ENCODE measurements at regions of chr7 and their contacts with region 1.

Region 1: GRCh38 chr7:120805636-120806388 is 52.1 kb downstream of the TSPAN12 start:
- DNase-seq: peak in 1 of 2 donors; percentile 53
- ATAC-seq: peak; percentile 56

Region 2: DNA sequence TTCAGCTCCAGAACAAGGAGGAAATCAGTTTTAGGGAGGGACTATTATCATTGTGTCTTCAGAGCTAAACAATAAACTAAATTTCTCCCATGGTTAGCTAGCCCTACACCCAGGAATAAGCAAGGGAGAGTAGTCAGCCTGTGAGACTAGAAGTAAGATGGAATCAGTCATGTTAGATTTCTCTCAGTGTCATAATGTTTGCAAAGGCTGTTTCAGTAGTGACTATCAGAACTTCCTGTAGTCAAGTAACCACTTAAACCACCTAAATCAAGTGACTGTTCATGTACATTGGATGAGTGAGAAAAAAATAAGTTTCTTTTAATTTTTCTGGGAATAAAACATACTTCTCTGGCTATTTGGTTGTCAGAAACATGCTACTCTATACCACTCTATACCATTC is 411.2 kb before region 1 on chr7:
- intact Hi-C with region 1: no loop called
- DNase-seq: no peak
- ATAC-seq: no peak

Region 3: DNA sequence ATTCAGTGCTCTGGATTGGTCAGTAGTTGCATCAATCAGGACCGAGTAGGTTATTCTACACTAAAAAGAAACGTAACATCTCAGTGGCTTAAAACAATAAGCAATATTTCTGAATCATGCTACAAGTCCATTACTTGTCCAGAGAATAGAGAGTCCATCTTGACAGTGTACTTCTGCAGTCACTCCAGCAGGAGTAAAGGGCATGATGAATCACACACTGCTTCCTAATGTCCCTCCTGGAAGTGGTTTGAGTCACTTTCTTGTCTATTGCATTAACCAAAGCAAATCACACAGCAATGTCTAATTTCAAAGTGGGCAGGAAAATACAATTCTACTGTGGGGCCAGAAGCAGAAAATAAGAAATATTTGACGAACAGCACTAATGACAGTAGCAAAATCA is 72.7 kb before region 1 on chr7:
- intact Hi-C with region 1: no loop called
- DNase-seq: no peak
- ATAC-seq: no peak

Region 4: DNA sequence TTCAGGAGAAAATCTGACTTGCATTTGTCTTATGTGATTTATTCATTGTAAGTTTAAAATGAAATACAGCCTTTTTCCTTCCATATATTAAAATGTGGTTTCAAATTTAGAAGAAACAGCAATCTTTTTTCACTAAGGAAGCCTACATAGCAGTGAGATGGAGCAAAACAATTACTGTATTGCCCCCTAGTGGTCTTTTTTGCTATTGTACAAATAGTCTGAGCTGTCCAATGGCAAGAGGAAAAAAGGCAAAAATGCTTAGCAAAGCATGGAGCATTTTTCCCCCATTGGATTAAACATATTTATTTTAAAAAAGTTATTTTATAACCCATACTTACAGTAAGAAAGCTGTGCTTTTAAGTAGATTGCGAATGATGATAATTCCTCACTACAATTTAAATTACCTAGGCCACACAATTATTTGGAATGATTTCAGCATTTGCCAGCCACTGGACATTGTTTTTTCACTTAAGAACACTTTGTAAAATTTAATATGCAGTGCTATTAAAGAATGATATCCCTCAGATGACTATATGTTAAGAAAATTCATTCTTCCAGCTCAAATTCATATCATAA is 302.2 kb after region 1 on chr7:
- intact Hi-C with region 1: loop called in 1 of 2 experiments (anchors 10 kb)
- DNase-seq: no peak
- ATAC-seq: peak; percentile 65